PC-3 (cell line): ENCODE measurements at regions of chr4 and their contacts with region 1.

Region 1: GRCh38 chr4:87679449-87680169 is 29.5 kb downstream of the DMP1 start:
- DNase-seq: peak; percentile 53
- ATAC-seq: no peak
- H3K4me3 ChIP-seq: no peak overlapping the region
- H3K27ac ChIP-seq: no peak overlapping the region
- H3K4me1 ChIP-seq: no peaks in the 10 kb centered on the region
- H3K27me3 ChIP-seq: no peaks in the 10 kb centered on the region
- CTCF ChIP-seq: peak; percentile 80

Region 2: DNA sequence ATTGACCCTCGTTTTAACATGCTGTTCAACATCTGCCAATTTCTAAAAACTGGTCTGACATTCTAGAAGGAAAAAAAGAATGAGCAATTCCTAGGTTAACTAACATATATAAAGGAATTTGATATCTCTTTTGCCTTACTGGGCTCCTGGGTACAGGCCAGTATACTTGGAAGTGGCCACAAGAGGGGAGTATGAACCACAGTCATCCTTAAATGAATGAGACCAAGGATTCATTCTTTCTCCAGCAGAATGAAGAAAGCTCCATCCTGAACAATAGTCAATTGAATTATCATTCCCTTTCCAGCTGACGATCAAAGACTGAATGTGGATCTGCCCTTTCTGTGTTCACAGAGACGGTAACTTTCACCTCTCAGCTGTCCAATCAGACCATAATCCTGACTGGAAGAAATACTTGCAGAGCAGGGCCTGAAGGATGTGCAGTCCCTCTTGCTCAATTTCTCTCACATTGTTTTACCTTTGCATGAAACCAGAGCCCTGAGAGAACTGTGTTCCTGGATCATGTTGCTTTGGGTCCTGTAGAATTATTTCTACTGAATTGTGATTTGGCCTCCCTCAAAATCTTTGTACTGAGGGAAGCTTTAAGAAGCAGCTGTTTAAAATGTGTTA is 135.7 kb before region 1 on chr4:
- CTCF ChIA-PET with region 1: no interaction called
- POLR2A ChIA-PET with region 1: no interaction called
- intact Hi-C with region 1: loop called (anchors 1 kb)
- DNase-seq: peak; percentile 69
- ATAC-seq: peak; percentile 80
- H3K4me3 ChIP-seq: no peak overlapping the region
- H3K27ac ChIP-seq: no peak overlapping the region
- H3K4me1 ChIP-seq: no peaks in the 10 kb centered on the region
- H3K27me3 ChIP-seq: no peaks in the 10 kb centered on the region
- CTCF ChIP-seq: peak; percentile 73

Region 3: GRCh38 chr4:87973283-87974169 is 293.9 kb after region 1 on chr4:
- CTCF ChIA-PET with region 1: no interaction called
- POLR2A ChIA-PET with region 1: no interaction called
- intact Hi-C with region 1: loop called (anchors 10 kb)
- DNase-seq: peak; percentile 70
- ATAC-seq: peak; percentile 60; the same call in 1 of the 2 replicates
- H3K4me3 ChIP-seq: no peak overlapping the region
- H3K27ac ChIP-seq: no peak overlapping the region
- H3K4me1 ChIP-seq: peaks cover 14% of the 10 kb centered on the region; the same call in 1 of the 2 replicates
- H3K27me3 ChIP-seq: no peaks in the 10 kb centered on the region
- CTCF ChIP-seq: peak; percentile 74